Sigmoid colon (tissue), 7 donors: ENCODE measurements at regions of chr14 and their contacts with region 1.

Region 1: DNA sequence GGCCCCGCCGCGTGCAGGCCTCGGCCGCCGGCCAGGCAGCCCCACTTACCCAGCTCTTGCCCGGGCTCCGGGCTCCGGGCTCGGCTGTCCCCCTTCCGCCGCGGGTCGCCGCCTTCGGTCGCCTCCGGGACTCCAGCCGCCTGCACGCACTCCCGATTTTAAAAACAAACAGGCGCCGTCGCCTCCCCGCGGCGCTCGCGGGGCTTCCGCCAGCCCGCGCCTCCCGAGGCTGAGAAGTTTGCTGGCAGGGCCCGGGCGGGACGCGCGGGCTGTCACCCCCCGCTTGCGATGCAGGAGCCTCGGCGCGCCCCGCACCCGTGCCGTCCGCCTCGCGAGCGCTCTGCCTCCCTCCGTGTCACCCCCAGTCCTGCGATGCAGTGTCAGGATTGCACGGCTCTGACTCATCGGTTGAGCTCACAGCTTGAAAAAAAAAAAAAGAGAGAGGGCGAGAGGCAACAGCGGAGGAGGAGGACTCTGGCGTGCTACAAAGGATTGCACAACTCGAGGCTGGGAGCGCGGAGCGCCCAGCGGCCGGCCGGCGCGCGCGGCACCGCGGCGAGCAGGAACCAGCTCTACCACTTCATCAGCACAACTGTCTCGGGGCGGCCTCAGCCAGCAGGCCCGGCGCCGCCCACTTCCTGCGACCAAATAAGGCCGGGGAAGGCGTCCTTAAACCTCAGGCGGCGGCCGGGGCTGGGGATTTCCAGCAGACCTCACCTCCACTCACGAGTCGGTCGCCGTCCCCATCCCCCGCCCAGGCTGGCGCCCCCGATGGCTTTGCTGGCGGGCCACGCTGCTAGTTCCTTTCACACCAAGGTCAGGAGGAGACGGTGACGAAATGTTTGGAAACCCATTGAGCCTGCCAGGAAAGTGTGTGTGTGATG is 45.8 kb upstream of the PNMA1 start:
- DNase-seq: peak; percentile 98
- H3K4me3 ChIP-seq: peak overlapping the region; percentile 54 to 94 (median 90)
- H3K27ac ChIP-seq: peak overlapping the region; percentile 99 to 100 (median 100)
- H3K4me1 ChIP-seq: peaks cover 0 to 90% (median 86%) of the 10 kb centered on the region in 4 donors
- H3K27me3 ChIP-seq: no peaks in the 10 kb centered on the region
- CTCF ChIP-seq: peak in 2 of 4 experiments; percentile 13 to 29
- EP300 ChIP-seq: peak in 2 of 4 donors; percentile 59 to 75
- POLR2A ChIP-seq: peak; percentile 80 to 86

Region 2: DNA sequence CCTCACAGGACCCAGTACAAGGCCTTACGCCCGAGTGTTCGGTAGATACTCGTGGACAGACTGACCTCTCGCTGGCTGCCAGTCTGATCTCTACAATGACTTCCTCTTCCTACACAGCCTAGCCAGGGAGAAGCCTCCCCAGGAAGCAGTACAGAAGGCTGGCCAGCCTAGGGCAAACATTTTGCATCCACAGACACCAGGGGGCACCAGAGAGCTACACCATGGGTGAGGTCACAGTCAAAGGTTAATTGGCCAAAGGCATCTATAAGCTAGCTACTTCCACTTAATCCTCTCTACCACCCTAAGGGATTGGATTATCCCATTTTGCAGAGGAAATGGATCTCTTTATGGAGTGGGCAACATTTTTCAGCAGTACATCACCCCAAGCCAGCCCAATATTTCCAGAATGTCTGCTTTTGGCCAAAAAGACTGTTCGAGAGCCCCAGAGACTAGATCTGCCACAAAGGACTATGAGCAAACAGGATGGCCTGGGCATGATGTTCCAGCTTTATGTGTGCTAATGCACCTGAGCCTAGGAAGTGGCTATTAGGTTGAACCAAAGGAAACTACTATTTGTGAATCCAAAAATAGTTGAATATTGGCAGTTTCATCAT is 31.1 kb before region 1 on chr14:
- intact Hi-C with region 1: loop called (anchors 2 kb)
- DNase-seq: peak; percentile 92
- H3K4me3 ChIP-seq: no peak overlapping the region
- H3K27ac ChIP-seq: peak overlapping the region; percentile 68 to 99 (median 88)
- H3K4me1 ChIP-seq: peaks cover 0 to 82% (median 68%) of the 10 kb centered on the region in 4 donors
- H3K27me3 ChIP-seq: no peaks in the 10 kb centered on the region
- CTCF ChIP-seq: peak; percentile 91 to 98 (median 96)
- EP300 ChIP-seq: no peak
- POLR2A ChIP-seq: no peak

Region 3: DNA sequence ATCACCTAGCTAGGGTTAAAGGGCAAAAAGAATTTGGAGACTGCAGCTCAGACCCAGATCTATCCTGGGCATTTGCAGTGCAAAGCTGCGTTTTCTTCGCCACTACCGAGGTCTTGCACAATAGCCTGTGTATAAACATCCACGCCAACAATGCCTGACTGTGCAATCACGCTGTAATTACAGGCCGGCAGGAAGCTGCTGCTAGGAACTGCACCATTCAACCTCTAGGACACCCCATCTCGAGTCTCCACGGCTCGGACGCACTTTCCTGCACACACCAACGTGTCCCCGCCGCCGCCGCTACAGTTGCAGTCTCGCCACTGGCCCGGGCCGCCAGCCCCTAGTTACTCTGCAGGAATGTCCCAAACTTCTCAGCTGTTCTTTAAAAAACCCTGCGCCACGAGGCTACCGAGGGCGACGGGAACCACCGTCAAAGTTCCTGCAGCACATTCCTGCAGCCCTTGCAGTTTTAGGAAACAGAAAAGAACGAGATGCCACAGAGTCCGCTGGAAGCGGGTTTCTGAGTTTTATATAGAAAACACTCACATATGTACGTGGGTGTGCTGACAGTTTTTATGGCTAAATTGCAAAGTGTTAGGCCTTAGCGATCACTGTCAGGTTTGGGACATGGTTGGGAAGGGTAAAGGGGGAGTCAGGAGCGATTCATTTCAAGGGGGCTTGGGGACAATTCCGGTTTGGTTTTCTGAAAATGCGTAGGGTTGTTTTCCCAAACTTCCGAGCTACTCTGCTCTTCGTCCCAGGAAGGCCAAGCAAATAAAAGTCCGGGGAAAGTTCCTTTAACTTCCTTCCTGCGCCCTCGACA is 26.1 kb after region 1 on chr14:
- intact Hi-C with region 1: loop called (anchors 1 kb)
- DNase-seq: peak; percentile 94
- H3K4me3 ChIP-seq: peak overlapping the region; percentile 51 to 77 (median 70)
- H3K27ac ChIP-seq: peak overlapping the region; percentile 96 to 99 (median 98)
- H3K4me1 ChIP-seq: peaks cover 0 to 81% (median 74%) of the 10 kb centered on the region in 4 donors
- H3K27me3 ChIP-seq: no peaks in the 10 kb centered on the region
- CTCF ChIP-seq: peak in 2 of 4 experiments; percentile 37 to 59
- EP300 ChIP-seq: peak in 1 of 4 donors; percentile 49
- POLR2A ChIP-seq: peak; percentile 78 to 84

Region 4: DNA sequence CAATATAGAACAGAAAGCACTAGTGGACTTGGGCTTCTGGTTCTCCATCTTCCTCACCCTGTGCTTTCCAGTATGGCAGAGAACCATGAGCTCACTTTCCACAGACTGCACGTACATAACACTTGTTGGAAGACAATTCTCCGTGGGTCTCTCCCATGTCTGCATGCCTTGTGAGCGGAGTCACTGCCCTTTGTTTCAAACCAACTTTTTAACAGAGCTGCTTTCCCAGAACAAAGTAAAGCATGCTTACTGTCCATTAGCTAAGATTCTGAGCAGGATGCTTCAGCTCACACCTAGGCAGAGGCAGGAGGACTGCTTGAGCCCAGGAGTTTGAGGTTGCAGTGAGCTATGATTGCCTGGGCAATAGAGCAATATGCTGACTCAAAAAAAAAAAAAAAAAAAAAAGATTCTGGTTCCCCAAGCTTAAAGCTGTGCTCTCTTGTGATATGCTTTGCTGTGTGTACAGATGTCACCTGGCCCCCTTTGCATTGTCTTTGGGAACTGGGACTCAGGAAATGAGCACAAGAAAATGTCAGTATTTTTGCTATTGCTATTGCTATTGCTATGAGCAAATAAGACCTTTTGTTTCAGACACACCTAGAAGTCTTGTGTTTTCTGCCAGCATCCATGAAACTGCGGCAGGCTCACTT is 37.1 kb after region 1 on chr14:
- intact Hi-C with region 1: no loop called
- DNase-seq: peak; percentile 13
- H3K4me3 ChIP-seq: no peak overlapping the region
- H3K27ac ChIP-seq: peak overlapping the region in 1 of 4 donors; percentile 98
- H3K4me1 ChIP-seq: peaks cover 0 to 35% (median 20%) of the 10 kb centered on the region in 4 donors
- H3K27me3 ChIP-seq: no peaks in the 10 kb centered on the region
- CTCF ChIP-seq: no peak
- EP300 ChIP-seq: no peak
- POLR2A ChIP-seq: no peak

Region 5: DNA sequence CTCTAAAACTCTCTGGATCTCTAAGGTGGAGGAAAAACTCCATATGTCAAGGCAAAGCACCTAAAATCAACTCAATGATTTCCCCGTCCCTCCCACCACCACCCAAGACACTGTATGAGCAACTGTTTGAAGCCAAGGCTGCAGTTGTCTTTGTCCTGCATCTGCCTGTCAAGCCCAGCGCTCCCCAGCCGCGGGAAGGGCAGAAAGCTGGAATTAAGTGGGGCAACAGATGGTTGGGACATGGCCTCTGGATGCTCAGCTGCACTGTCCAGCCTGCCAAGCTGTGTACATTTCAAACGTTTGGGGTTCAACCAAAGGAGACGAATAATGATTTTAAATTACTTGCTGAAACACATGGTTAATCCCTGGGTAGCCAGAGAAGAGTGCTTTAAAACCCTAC is 49.4 kb after region 1 on chr14:
- intact Hi-C with region 1: no loop called
- DNase-seq: no peak
- H3K4me3 ChIP-seq: no peak overlapping the region
- H3K27ac ChIP-seq: no peak overlapping the region
- H3K4me1 ChIP-seq: no peaks in the 10 kb centered on the region
- H3K27me3 ChIP-seq: no peaks in the 10 kb centered on the region
- CTCF ChIP-seq: no peak
- EP300 ChIP-seq: no peak
- POLR2A ChIP-seq: no peak

Region 6: DNA sequence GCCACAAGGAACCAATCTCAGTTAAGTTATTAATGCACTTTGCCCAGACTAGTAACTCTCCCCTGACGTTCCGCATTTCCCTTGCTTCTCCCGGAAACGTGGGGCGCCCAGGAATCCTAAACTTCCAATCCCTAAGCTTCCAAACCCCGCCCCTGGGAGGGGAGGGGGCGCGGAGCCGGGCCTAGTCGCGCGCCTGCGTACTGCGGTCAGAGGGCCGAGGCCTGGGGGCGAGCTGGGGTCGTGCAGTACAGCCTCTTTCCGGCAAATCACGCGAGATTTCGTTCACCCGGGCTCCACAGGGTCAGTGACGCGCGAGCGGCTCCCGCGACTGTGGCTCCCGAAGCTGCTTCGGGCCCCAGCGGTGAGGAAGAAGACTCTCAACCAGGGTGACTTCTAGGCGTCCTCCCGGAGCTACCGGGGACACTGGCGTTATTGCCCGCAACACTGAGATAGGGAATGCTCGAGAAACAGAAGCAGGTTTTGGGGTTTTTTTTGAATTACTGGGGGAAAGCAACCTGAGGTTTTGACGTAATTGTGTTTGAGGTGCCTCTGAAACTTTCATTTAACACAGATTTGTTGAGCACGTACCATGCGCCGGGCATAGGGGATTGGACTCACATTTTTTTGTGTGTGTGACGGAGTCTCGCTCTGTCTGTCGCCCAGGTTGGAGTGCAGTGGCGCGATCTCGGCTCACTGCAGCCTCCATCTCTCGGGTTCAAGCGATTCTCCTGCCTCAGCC is 91.9 kb after region 1 on chr14 and contains the start of gene PTGR2:
- intact Hi-C with region 1: loop called (anchors 2 kb)
- DNase-seq: peak; percentile 98
- H3K4me3 ChIP-seq: peak within 1 kb of the TSS; percentile 36 to 61 (median 60)
- H3K27ac ChIP-seq: peak within 1 kb of the TSS; percentile 89 to 93 (median 92)
- H3K4me1 ChIP-seq: peaks cover 0 to 16% (median 10%) of the 10 kb centered on the region in 4 donors
- H3K27me3 ChIP-seq: no peaks in the 10 kb centered on the region
- CTCF ChIP-seq: peak in 3 of 4 experiments; percentile 16 to 24 (median 20)
- EP300 ChIP-seq: peak in 1 of 4 donors; percentile 20
- POLR2A ChIP-seq: peak; percentile 77 to 93
- total RNA-seq, gene PTGR2: 5.0 to 11.4 (median 6.3) TPM